ENCODE measurements at regions of chrX and their contacts with region 1.

Region 1: GRCh38 chrX:119871599-119872395 is at the starts of genes NDUFA1 and RNF113A:
- DNase-seq: peak; percentile 90
- ATAC-seq: peak; percentile 88
- H3K4me3 ChIP-seq: peak within 1 kb of the TSS; percentile 64 to 87 (median 79)
- H3K4me3 Mint-ChIP-seq: peak within 1 kb of the TSS; percentile 98
- H3K27ac ChIP-seq: peak within 1 kb of the TSS; percentile 91 to 94
- H3K27ac Mint-ChIP-seq: peak within 1 kb of the TSS; percentile 100
- H3K4me1 ChIP-seq: peaks cover 7 to 16% of the 10 kb centered on the region in 2 donors
- H3K4me1 Mint-ChIP-seq: peaks cover 22% of the 10 kb centered on the region
- H3K27me3 ChIP-seq: no peaks in the 10 kb centered on the region
- H3K27me3 Mint-ChIP-seq: no peaks in the 10 kb centered on the region
- CTCF ChIP-seq: no peak
- total RNA-seq, gene NDUFA1: 32.8 and 39.5 TPM in 2 replicates
- total RNA-seq, gene RNF113A: 32.1 and 37.2 TPM in 2 replicates

Region 2: GRCh38 chrX:119574394-119575266 is 297.2 kb before region 1 on chrX and contains the start of gene UBE2A:
- CTCF ChIA-PET with region 1: no interaction called
- POLR2A ChIA-PET with region 1: no interaction called
- intact Hi-C with region 1: loop called (anchors 1 kb)
- DNase-seq: peak; percentile 94
- ATAC-seq: peak; percentile 94
- H3K4me3 ChIP-seq: peak within 1 kb of the TSS; percentile 42 to 77 (median 70)
- H3K4me3 Mint-ChIP-seq: peak within 1 kb of the TSS; percentile 88
- H3K27ac ChIP-seq: peak within 1 kb of the TSS; percentile 68 to 83
- H3K27ac Mint-ChIP-seq: peak within 1 kb of the TSS; percentile 88
- H3K4me1 ChIP-seq: peaks cover 26 to 32% of the 10 kb centered on the region in 2 donors
- H3K4me1 Mint-ChIP-seq: peaks cover 34% of the 10 kb centered on the region
- H3K27me3 ChIP-seq: no peaks in the 10 kb centered on the region
- H3K27me3 Mint-ChIP-seq: no peaks in the 10 kb centered on the region
- CTCF ChIP-seq: no peak
- total RNA-seq, gene UBE2A: 67.1 and 70.9 TPM in 2 replicates

Region 3: GRCh38 chrX:119693040-119693995 is 178.5 kb before region 1 on chrX and contains the start of gene SEPTIN6:
- CTCF ChIA-PET with region 1: no interaction called
- POLR2A ChIA-PET with region 1: no interaction called
- intact Hi-C with region 1: loop called (anchors 5 kb)
- DNase-seq: peak; percentile 92
- ATAC-seq: peak; percentile 66
- H3K4me3 ChIP-seq: peak within 1 kb of the TSS; percentile 69 to 78 (median 71)
- H3K4me3 Mint-ChIP-seq: peak within 1 kb of the TSS; percentile 90
- H3K27ac ChIP-seq: peak within 1 kb of the TSS; percentile 71 to 99
- H3K27ac Mint-ChIP-seq: peak within 1 kb of the TSS; percentile 91
- H3K4me1 ChIP-seq: peaks cover 68 to 77% of the 10 kb centered on the region in 2 donors
- H3K4me1 Mint-ChIP-seq: peaks cover 60% of the 10 kb centered on the region
- H3K27me3 ChIP-seq: no peaks in the 10 kb centered on the region
- H3K27me3 Mint-ChIP-seq: no peaks in the 10 kb centered on the region
- CTCF ChIP-seq: peak; percentile 6
- total RNA-seq, gene SEPTIN6: 290 and 310 TPM in 2 replicates

Region 4: GRCh38 chrX:119852382-119853353 is 19.1 kb before region 1 on chrX and contains the start of gene UPF3B:
- CTCF ChIA-PET with region 1: interaction called, 4 read pairs
- POLR2A ChIA-PET with region 1: interaction called, 10 read pairs
- intact Hi-C with region 1: loop called (anchors 1 kb)
- DNase-seq: peak; percentile 95
- ATAC-seq: peak; percentile 96
- H3K4me3 ChIP-seq: peak within 1 kb of the TSS; percentile 69 to 93 (median 84)
- H3K4me3 Mint-ChIP-seq: peak within 1 kb of the TSS; percentile 98
- H3K27ac ChIP-seq: peak within 1 kb of the TSS; percentile 92 to 93
- H3K27ac Mint-ChIP-seq: peak within 1 kb of the TSS; percentile 97
- H3K4me1 ChIP-seq: peaks cover 0 to 11% of the 10 kb centered on the region in 2 donors
- H3K4me1 Mint-ChIP-seq: peaks cover 15% of the 10 kb centered on the region
- H3K27me3 ChIP-seq: no peaks in the 10 kb centered on the region
- H3K27me3 Mint-ChIP-seq: no peaks in the 10 kb centered on the region
- CTCF ChIP-seq: no peak
- total RNA-seq, gene UPF3B: 20.4 and 22.1 TPM in 2 replicates

Region 5: GRCh38 chrX:119943185-119943988 is 71.6 kb after region 1 on chrX and contains the start of gene NKAP:
- CTCF ChIA-PET with region 1: no interaction called
- POLR2A ChIA-PET with region 1: no interaction called
- intact Hi-C with region 1: loop called (anchors 1 kb)
- DNase-seq: peak; percentile 90
- ATAC-seq: peak; percentile 88
- H3K4me3 ChIP-seq: peak within 1 kb of the TSS; percentile 56 to 91 (median 75)
- H3K4me3 Mint-ChIP-seq: peak within 1 kb of the TSS; percentile 96
- H3K27ac ChIP-seq: peak within 1 kb of the TSS; percentile 86 to 88
- H3K27ac Mint-ChIP-seq: peak within 1 kb of the TSS; percentile 94
- H3K4me1 ChIP-seq: peaks cover 15 to 21% of the 10 kb centered on the region in 2 donors
- H3K4me1 Mint-ChIP-seq: peaks cover 18% of the 10 kb centered on the region
- H3K27me3 ChIP-seq: no peaks in the 10 kb centered on the region
- H3K27me3 Mint-ChIP-seq: peaks cover 1% of the 10 kb centered on the region
- CTCF ChIP-seq: no peak
- total RNA-seq, gene NKAP: 17.9 TPM in 2 replicates